PC-9 (cell line): ENCODE measurements at regions of chr15 and their contacts with region 1.

Region 1: GRCh38 chr15:80760960-80761359 is 18.2 kb upstream of the CEMIP start:
- DNase-seq: no peak
- H3K4me3 ChIP-seq: no peak overlapping the region
- H3K27ac ChIP-seq: no peak overlapping the region
- H3K4me1 ChIP-seq: no peaks in the 10 kb centered on the region
- H3K27me3 ChIP-seq: no peaks in the 10 kb centered on the region
- CTCF ChIP-seq: no peak

Region 2: GRCh38 chr15:80127911-80128310 is 633.0 kb before region 1 on chr15:
- CTCF ChIA-PET with region 1: no interaction called
- POLR2A ChIA-PET with region 1: no interaction called
- intact Hi-C with region 1: no loop called
- DNase-seq: no peak
- H3K4me3 ChIP-seq: no peak overlapping the region
- H3K27ac ChIP-seq: no peak overlapping the region
- H3K4me1 ChIP-seq: no peaks in the 10 kb centered on the region
- H3K27me3 ChIP-seq: no peaks in the 10 kb centered on the region
- CTCF ChIP-seq: no peak

Region 3: DNA sequence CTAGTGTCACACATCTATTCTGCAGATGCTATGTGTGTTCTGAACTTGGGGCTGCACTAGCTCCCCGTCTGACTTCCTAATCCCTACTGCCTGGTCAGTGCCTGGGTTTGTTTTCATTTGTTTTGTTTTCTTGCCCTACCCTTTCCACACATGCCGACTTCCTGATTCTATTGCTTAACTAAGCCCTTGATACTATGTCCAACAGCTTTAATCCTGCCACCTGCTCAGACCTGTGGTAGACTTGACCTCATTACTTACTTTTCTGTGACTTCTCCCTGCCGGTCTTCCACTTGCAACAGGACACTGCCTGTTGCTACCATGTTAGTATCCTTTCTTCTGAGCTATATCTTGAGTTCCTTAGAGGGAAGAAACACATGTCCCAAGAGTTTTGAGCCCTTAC is 21.0 kb before region 1 on chr15:
- CTCF ChIA-PET with region 1: no interaction called
- POLR2A ChIA-PET with region 1: interaction called, 19 read pairs
- intact Hi-C with region 1: no loop called
- DNase-seq: peak; percentile 7 to 81
- H3K4me3 ChIP-seq: no peak overlapping the region
- H3K27ac ChIP-seq: peak overlapping the region; percentile 43
- H3K4me1 ChIP-seq: peaks cover 53% of the 10 kb centered on the region
- H3K27me3 ChIP-seq: no peaks in the 10 kb centered on the region
- CTCF ChIP-seq: no peak

Region 4: GRCh38 chr15:81049835-81050234 is 288.9 kb after region 1 on chr15:
- CTCF ChIA-PET with region 1: no interaction called
- POLR2A ChIA-PET with region 1: interaction called, 12 read pairs
- intact Hi-C with region 1: no loop called
- DNase-seq: no peak
- H3K4me3 ChIP-seq: no peak overlapping the region
- H3K27ac ChIP-seq: no peak overlapping the region
- H3K4me1 ChIP-seq: no peaks in the 10 kb centered on the region
- H3K27me3 ChIP-seq: no peaks in the 10 kb centered on the region
- CTCF ChIP-seq: no peak